ENCODE measurements at regions of chr11 and their contacts with region 1.

Region 1: GRCh38 chr11:119450590-119451326 is 27.8 kb upstream of the THY1 start:
- DNase-seq: no peak
- ATAC-seq: no peak

Region 2: GRCh38 chr11:119389611-119390254 is 61.0 kb before region 1 on chr11:
- intact Hi-C with region 1: loop called (anchors 10 kb)
- DNase-seq: no peak
- ATAC-seq: no peak

Measured in left ventricle myocardium superior (tissue), 1 donor.